Motor neuron (in vitro differentiated cells): ENCODE measurements at regions of chr6 and their contacts with region 1.

Region 1: GRCh38 chr6:127737009-127737486 is 160.1 kb downstream of the C6orf58 start:
- ATAC-seq: peak; percentile 82 to 98 (median 88)
- H3K4me3 ChIP-seq: no peak overlapping the region
- H3K27ac ChIP-seq: no peak overlapping the region
- H3K4me1 ChIP-seq: no peaks in the 10 kb centered on the region

Region 2: DNA sequence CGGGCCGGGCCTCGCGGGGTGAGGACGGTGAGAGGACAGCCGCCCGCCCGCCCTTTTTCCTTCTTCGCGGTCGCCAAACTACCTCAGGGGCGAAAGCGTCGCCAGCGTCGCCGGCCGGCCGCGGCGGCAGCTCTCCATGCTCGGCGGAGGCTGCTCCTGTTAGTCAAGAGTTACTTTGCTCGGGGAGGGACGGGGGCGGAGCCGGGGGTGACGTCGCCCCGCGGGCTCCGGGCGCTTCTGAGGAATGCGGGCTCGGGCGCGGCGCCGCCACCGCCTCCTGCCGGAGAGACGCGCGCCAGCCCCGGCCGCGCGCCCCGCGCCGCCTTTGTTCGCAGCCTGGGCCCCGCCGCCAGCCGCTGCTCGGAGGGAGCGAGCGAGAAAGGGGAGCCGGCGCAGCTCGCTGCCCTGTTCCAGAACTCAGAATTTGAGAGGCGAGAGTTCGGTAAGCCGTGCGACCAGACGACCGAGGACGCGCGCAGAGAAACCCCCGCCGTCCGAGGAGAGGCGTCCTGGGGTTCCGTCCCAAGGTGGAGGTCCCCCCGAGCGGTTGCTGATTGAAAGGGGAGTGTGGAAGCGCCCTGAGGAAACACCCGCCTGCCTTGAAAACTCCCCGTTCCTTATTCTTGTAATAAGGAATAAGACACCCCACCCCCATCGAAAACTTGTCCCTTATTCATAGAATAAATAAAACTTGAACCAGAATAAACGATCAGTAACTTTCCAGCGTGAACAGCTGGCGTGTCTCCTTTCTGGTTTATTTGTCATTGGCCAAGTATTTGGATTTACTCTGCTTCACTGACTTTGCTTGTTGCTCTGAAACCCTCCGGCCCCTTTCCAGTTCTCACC is 783.6 kb after region 1 on chr6 and contains the start of gene PTPRK:
- in situ Hi-C with region 1: loop called in 1 of 9 experiments (anchors 25 kb)
- ATAC-seq: peak; percentile 81 to 92 (median 88)
- H3K4me3 ChIP-seq: peak within 1 kb of the TSS; percentile 60 to 78 (median 67)
- H3K27ac ChIP-seq: peak within 1 kb of the TSS; percentile 77 to 86
- H3K4me1 ChIP-seq: peaks cover 11 to 16% of the 10 kb centered on the region in 2 donors
- total RNA-seq, gene PTPRK: 14.4 to 93.9 (median 26.3) TPM

Region 3: GRCh38 chr6:128731249-128732165 is 994.5 kb after region 1 on chr6:
- in situ Hi-C with region 1: loop called in 3 of 9 experiments (anchors 10 to 25 kb)
- ATAC-seq: peak in 5 of 8 experiments; percentile 39 to 78 (median 72)
- H3K4me3 ChIP-seq: no peak overlapping the region
- H3K27ac ChIP-seq: no peak overlapping the region
- H3K4me1 ChIP-seq: no peaks in the 10 kb centered on the region

Region 4: GRCh38 chr6:129370268-129370916 is 1633.3 kb after region 1 on chr6:
- in situ Hi-C with region 1: loop called in 2 of 9 experiments (anchors 25 kb)
- ATAC-seq: peak in 3 of 8 experiments; percentile 27 to 44 (median 36)
- H3K4me3 ChIP-seq: no peak overlapping the region
- H3K27ac ChIP-seq: no peak overlapping the region
- H3K4me1 ChIP-seq: no peaks in the 10 kb centered on the region